ENCODE measurements at regions of chr3 and their contacts with region 1.

Region 1: DNA sequence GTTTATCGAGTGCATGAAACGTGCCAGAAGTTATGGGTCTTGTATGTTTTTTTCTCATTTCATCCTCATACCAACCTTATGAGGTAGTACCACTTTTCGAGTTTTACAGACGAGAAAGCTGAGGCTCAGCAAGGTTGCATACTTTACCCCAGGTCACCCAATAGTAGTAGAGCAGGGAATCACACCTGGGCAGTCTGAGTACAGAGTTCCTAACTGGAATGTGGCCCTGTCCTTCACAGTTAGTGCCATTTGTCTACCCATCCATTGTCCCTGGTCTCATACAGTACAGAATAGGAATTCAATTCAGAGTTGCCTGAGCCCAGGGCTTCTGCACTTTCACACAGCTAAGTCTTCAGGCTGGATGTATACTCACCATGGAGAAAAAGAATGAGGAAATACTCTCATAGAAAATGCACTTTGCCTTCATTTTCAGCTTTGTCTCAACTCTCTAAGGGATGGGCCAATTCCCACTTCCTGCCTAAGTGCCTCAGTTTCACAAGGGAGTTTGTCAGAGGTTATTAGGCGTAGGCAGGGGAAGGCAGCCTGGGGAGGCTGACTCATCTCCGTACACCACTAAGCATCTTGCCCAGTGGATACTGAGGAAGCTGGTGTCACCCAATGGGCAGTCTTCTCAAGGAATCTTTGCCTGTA is 93.2 kb downstream of the TMEM212 start:
- DNase-seq: peak; percentile 88 to 98 (median 98)
- H3K4me3 ChIP-seq: no peak overlapping the region
- H3K4me3 Mint-ChIP-seq: no peak overlapping the region
- H3K27ac ChIP-seq: peak overlapping the region; percentile 67 to 78
- H3K27ac Mint-ChIP-seq: peak overlapping the region; percentile 85 to 94 (median 93)
- H3K4me1 ChIP-seq: peaks cover 33 to 41% of the 10 kb centered on the region in 2 donors
- H3K4me1 Mint-ChIP-seq: peaks cover 45% of the 10 kb centered on the region
- H3K27me3 ChIP-seq: no peaks in the 10 kb centered on the region
- H3K27me3 Mint-ChIP-seq: no peaks in the 10 kb centered on the region
- CTCF ChIP-seq: no peak

Region 2: DNA sequence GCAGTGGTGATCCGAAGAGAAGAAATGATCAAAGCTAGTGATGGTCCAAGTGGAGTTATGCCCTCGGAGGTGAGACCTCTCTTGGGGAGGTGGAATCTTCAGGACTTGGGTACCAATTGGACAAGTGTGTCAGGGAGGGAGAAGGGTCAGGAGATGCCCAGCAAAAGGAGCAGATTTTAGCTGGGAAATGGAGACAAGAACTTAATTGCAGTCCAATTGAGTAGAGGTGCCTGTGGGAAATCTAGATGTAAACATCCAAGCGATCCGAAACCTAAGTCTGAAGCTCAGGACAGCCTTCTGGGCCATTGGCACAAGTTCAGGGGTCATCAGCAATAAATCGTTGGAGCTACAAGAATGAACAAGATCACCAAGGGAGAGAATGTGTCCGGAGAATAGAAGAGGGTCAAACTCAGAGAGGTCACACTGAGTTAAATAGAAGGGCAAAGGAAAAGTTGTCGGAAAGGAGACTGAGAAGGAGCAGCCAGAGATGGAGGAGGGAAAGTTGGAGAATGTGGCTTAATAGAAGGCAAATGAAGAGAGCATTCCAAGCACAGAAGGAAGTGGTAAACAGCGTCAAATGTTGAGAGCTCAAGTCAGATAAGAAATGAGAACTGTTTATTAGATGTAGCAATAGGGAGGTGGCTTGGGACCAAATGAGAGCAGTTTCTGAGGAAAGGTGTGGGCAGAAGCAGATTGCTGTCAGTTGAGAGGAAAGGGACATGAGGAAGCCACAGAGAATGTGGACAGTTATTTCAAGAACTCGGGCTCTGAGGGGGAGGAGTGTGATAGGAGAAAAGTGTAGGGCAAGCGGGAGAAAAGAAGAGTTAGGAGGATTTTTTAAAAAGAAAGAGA is 38.9 kb after region 1 on chr3:
- intact Hi-C with region 1: loop called in 1 of 2 experiments (anchors 5 kb)
- DNase-seq: peak in 2 of 3 donors; percentile 46 to 66
- H3K4me3 ChIP-seq: peak overlapping the region in 2 of 3 experiments; percentile 27 to 35
- H3K4me3 Mint-ChIP-seq: no peak overlapping the region
- H3K27ac ChIP-seq: peak overlapping the region in 1 of 2 donors; percentile 85
- H3K27ac Mint-ChIP-seq: no peak overlapping the region
- H3K4me1 ChIP-seq: peaks cover 77 to 79% of the 10 kb centered on the region in 2 donors
- H3K4me1 Mint-ChIP-seq: peaks cover 57% of the 10 kb centered on the region
- H3K27me3 ChIP-seq: no peaks in the 10 kb centered on the region
- H3K27me3 Mint-ChIP-seq: no peaks in the 10 kb centered on the region
- CTCF ChIP-seq: no peak

Region 3: GRCh38 chr3:172208586-172209332 is 272.4 kb after region 1 on chr3:
- intact Hi-C with region 1: no loop called
- DNase-seq: no peak
- H3K4me3 ChIP-seq: no peak overlapping the region
- H3K4me3 Mint-ChIP-seq: no peak overlapping the region
- H3K27ac ChIP-seq: peak overlapping the region; percentile 14 to 73
- H3K27ac Mint-ChIP-seq: peak overlapping the region; percentile 53 to 88 (median 73)
- H3K4me1 ChIP-seq: peaks cover 9 to 11% of the 10 kb centered on the region in 2 donors
- H3K4me1 Mint-ChIP-seq: peaks cover 37% of the 10 kb centered on the region
- H3K27me3 ChIP-seq: no peaks in the 10 kb centered on the region
- H3K27me3 Mint-ChIP-seq: no peaks in the 10 kb centered on the region
- CTCF ChIP-seq: no peak